ENCODE measurements at regions of chr11 and their contacts with region 1.

Region 1: GRCh38 chr11:46346886-46347636 is at the start of gene DGKZ:
- DNase-seq: peak; percentile 99
- ATAC-seq: peak; percentile 93
- H3K4me3 Mint-ChIP-seq: peak within 1 kb of the TSS; percentile 90
- H3K27ac Mint-ChIP-seq: peak within 1 kb of the TSS; percentile 83
- H3K4me1 Mint-ChIP-seq: peaks cover 52% of the 10 kb centered on the region
- H3K27me3 Mint-ChIP-seq: no peaks in the 10 kb centered on the region
- CTCF ChIP-seq: no peak
- total RNA-seq, gene DGKZ: 48.1 and 53.6 TPM in 2 replicates

Region 2: GRCh38 chr11:45839204-45839603 is 507.9 kb before region 1 on chr11:
- CTCF ChIA-PET with region 1: no interaction called
- POLR2A ChIA-PET with region 1: no interaction called
- intact Hi-C with region 1: no loop called
- DNase-seq: no peak
- ATAC-seq: no peak
- H3K4me3 Mint-ChIP-seq: no peak overlapping the region
- H3K27ac Mint-ChIP-seq: no peak overlapping the region
- H3K4me1 Mint-ChIP-seq: peaks cover 23% of the 10 kb centered on the region
- H3K27me3 Mint-ChIP-seq: peaks cover 5% of the 10 kb centered on the region
- CTCF ChIP-seq: no peak

Region 3: GRCh38 chr11:46238967-46239800 is 107.9 kb before region 1 on chr11:
- CTCF ChIA-PET with region 1: interaction called, 3 read pairs
- POLR2A ChIA-PET with region 1: no interaction called
- intact Hi-C with region 1: loop called (anchors 1 kb)
- DNase-seq: peak; percentile 80
- ATAC-seq: peak; percentile 73
- H3K4me3 Mint-ChIP-seq: peak overlapping the region; percentile 64
- H3K27ac Mint-ChIP-seq: no peak overlapping the region
- H3K4me1 Mint-ChIP-seq: peaks cover 32% of the 10 kb centered on the region
- H3K27me3 Mint-ChIP-seq: peaks cover 39% of the 10 kb centered on the region
- CTCF ChIP-seq: peak; percentile 89

Region 4: GRCh38 chr11:46367244-46367915 is 20.3 kb after region 1 on chr11:
- CTCF ChIA-PET with region 1: interaction called, 9 read pairs
- POLR2A ChIA-PET with region 1: no interaction called
- intact Hi-C with region 1: loop called (anchors 1 kb)
- DNase-seq: peak; percentile 62
- ATAC-seq: peak; percentile 84
- H3K4me3 Mint-ChIP-seq: no peak overlapping the region
- H3K27ac Mint-ChIP-seq: no peak overlapping the region
- H3K4me1 Mint-ChIP-seq: peaks cover 10% of the 10 kb centered on the region
- H3K27me3 Mint-ChIP-seq: no peaks in the 10 kb centered on the region
- CTCF ChIP-seq: peak; percentile 19

Region 5: GRCh38 chr11:46392421-46393230 is 45.6 kb after region 1 on chr11:
- CTCF ChIA-PET with region 1: no interaction called
- POLR2A ChIA-PET with region 1: no interaction called
- intact Hi-C with region 1: loop called (anchors 2 kb)
- DNase-seq: peak; percentile 74
- ATAC-seq: peak; percentile 90
- H3K4me3 Mint-ChIP-seq: peak overlapping the region; percentile 70
- H3K27ac Mint-ChIP-seq: peak overlapping the region; percentile 35
- H3K4me1 Mint-ChIP-seq: peaks cover 24% of the 10 kb centered on the region
- H3K27me3 Mint-ChIP-seq: peaks cover 25% of the 10 kb centered on the region
- CTCF ChIP-seq: no peak

Measured in activated B cell treated with CpG ODN at 0.5 μM for 24 hours (primary cell).